ENCODE measurements at regions of chr16 and their contacts with region 1.

Region 1: DNA sequence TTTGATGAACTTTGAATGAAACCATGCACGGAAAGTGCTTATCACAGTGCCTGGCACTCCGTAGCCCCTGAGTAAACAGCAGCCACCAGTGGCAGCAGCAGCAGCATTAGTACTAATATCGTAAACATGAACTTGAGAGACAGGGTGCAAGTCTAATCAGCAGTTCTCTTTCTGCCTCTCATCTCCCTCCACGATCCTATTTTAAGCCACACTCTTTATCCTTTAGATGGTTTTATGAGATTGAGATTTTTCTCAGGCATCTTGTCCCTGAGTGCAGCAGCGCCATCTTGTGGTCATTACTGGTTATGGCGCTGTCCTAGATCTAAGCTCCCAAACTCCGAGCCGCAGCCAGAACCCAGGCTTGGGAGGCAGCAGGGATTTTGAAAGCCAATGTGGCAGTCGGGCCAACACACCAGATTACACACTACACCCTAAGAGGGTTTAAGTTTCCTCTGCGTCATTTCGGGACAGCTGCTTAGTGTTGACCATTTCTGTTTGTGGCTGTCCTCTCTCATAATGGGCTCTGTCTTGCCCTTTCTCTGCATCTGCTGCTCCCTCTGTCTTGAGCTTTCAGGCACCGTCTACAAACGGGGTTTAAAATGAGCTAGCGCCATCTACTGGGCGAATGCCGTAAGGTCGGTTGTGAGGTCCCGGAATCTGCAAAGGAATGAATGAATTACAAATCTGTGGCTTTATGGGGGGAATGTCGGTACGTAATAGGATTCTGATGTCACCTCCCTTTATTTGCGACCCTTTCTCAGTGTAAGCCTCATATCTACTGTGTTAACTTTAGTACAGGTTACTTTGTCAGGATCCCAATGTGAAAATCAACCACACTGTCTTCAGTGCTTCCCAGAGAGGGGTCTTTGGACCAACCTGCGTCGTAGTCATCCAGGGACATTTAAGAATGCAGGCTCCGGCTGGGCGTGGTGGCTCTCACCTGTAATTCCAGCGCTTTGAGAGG is 64.5 kb downstream of the CYLD start:
- DNase-seq: peak; percentile 90
- H3K4me3 Mint-ChIP-seq: peak overlapping the region; percentile 67
- H3K27ac Mint-ChIP-seq: peak overlapping the region; percentile 72
- H3K4me1 Mint-ChIP-seq: peaks cover 12% of the 10 kb centered on the region
- H3K27me3 Mint-ChIP-seq: no peaks in the 10 kb centered on the region

Region 2: DNA sequence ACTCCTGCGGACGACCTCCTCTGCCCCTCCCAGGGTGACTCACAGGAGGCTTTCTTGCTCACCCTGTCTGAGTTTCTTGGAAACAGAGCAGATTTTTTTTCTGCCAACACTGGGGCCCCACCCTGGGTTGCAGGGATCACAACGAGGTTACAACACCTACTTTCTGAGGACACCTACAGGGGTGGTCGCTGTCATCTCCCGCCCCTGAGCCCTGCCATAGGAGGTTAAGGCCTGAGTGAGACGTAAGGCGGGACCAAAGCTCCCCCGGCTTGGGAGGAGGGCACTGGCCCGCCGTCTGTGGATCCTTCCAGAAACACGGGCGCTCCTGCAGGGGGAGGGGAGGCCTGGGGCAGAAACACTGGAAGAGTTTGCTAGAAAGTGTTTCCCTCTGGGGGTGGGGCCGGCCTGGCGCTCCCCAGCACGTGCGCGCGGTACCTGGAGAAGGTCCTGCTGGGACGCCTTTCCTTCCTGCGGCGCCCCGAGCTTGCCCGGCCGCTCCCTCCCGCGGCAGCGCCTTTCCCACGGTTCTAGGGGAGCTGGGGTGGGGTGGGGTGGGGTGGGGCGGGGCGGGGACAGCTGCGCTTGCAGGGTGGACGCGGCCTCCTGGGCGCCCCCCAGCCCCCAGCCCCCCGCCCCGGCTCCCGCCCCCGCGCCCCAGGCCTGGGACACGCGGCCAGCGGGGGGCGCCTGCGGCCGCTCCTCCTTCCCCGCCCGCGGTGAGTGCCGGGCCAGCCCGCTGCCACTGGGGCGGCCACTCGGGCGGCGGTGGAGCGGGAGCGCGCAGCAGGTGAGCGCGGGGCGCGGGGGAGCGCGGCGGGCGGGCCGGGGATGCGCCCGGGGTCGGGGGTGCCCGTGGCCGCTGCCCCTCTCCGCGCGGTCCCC is 560.7 kb before region 1 on chr16:
- CTCF ChIA-PET with region 1: interaction called, 10 read pairs
- POLR2A ChIA-PET with region 1: no interaction called
- intact Hi-C with region 1: no loop called
- DNase-seq: peak; percentile 82
- H3K4me3 Mint-ChIP-seq: peak overlapping the region; percentile 78
- H3K27ac Mint-ChIP-seq: peak overlapping the region; percentile 65
- H3K4me1 Mint-ChIP-seq: peaks cover 11% of the 10 kb centered on the region
- H3K27me3 Mint-ChIP-seq: no peaks in the 10 kb centered on the region

Region 3: GRCh38 chr16:50360779-50361178 is 445.6 kb before region 1 on chr16:
- CTCF ChIA-PET with region 1: interaction called, 24 read pairs
- POLR2A ChIA-PET with region 1: no interaction called
- intact Hi-C with region 1: loop called (anchors 5 kb)
- DNase-seq: no peak
- H3K4me3 Mint-ChIP-seq: no peak overlapping the region
- H3K27ac Mint-ChIP-seq: peak overlapping the region; percentile 30
- H3K4me1 Mint-ChIP-seq: peaks cover 52% of the 10 kb centered on the region
- H3K27me3 Mint-ChIP-seq: no peaks in the 10 kb centered on the region

Region 4: GRCh38 chr16:50665128-50665878 is 141.1 kb before region 1 on chr16:
- CTCF ChIA-PET with region 1: interaction called, 430 read pairs
- POLR2A ChIA-PET with region 1: interaction called, 3 read pairs
- intact Hi-C with region 1: loop called (anchors 1 kb)
- DNase-seq: peak; percentile 87
- H3K4me3 Mint-ChIP-seq: peak overlapping the region; percentile 63
- H3K27ac Mint-ChIP-seq: peak overlapping the region; percentile 33
- H3K4me1 Mint-ChIP-seq: peaks cover 39% of the 10 kb centered on the region
- H3K27me3 Mint-ChIP-seq: no peaks in the 10 kb centered on the region

Region 5: DNA sequence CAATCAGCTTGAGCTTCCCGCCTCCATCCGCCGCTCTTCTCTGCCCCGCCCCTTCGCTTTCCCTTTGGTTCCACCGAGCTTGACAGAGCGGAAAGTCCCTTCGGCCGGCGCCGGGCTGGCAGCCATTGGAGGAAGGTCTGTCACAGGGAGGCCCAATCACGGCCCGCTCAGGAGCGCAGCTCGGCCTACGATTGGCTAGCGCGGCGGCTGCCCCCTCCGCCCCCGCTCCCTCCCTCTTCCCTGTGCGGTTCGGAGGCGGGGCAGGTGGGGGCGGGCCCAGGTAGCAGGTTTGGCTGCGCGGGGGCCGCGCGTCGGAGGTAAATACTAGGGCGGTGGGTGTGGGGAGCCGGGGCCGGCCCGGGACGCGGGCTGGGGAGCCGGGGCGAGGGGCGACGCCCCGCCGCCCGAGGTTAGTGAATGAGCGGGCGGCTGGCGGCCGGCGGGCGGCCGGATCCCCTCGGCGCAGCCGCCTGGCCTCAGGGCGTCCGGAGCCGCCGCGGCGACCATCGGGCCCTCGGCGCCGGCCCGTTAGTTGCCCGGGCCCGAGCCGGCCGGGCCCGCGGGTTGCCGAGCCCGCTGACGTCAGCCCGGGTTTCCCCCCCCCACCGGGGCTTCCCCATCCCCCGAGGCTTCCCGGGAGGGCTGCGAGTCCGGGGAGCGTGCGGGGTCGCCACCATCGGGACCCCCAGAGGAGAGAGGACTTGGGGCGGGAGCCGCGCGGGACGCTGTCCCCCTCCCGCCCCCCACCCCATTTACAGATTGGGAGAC is 64.4 kb before region 1 on chr16 and contains the start of gene CYLD:
- CTCF ChIA-PET with region 1: interaction called, 16 read pairs
- POLR2A ChIA-PET with region 1: no interaction called
- intact Hi-C with region 1: loop called (anchors 1 kb)
- DNase-seq: peak; percentile 100
- H3K4me3 Mint-ChIP-seq: peak within 1 kb of the TSS; percentile 94
- H3K27ac Mint-ChIP-seq: peak within 1 kb of the TSS; percentile 97
- H3K4me1 Mint-ChIP-seq: peaks cover 44% of the 10 kb centered on the region
- H3K27me3 Mint-ChIP-seq: no peaks in the 10 kb centered on the region
- total RNA-seq, gene CYLD: 133 to 135 TPM

Region 6: DNA sequence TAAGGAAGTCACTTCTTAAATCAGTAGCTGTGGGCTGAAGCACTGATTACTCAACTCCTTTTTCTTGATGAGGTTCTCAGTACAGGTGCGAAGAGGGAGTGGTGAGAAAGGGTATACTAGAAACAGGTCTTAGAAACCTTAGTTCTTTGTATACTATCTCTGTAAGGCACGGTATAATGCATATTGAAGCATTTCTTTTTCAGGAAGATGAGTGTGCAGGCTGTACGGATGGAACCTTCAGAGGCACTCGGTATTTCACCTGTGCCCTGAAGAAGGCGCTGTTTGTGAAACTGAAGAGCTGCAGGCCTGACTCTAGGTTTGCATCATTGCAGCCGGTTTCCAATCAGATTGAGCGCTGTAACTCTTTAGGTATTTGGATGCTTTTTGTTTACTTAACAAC is 25.3 kb before region 1 on chr16:
- CTCF ChIA-PET with region 1: interaction called, 39 read pairs
- POLR2A ChIA-PET with region 1: no interaction called
- intact Hi-C with region 1: loop called (anchors 1 kb)
- DNase-seq: peak; percentile 50
- H3K4me3 Mint-ChIP-seq: peak overlapping the region; percentile 33
- H3K27ac Mint-ChIP-seq: peak overlapping the region; percentile 78
- H3K4me1 Mint-ChIP-seq: peaks cover 70% of the 10 kb centered on the region
- H3K27me3 Mint-ChIP-seq: no peaks in the 10 kb centered on the region

Region 7: DNA sequence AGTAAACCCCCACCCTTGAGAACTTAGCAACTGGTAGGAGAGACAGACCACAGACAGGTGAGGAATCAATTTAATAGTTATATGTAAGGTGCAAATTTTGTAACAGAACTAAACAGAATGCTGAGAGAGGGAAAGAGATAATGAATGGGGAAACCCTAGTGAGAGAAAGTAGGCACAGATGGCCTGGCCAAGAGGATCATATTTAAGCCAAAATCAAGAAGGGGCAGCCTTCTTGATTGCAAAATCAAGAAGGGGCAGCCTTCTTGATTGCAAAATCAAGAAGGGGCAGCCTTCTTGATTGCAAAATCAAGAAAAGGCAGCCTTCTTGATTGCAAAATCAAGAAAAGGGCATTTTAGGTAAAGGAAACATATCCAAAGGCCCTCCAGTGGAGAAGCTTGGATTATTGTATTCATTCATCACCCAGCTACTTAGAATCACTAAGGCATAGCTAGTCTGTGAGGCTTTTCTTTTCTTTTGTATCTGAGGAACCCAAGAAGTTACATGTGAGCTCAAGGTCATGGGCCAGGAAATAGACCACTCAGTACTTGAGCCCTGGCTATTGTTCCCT is 126.1 kb after region 1 on chr16:
- CTCF ChIA-PET with region 1: no interaction called
- POLR2A ChIA-PET with region 1: no interaction called
- intact Hi-C with region 1: no loop called
- DNase-seq: no peak
- H3K4me3 Mint-ChIP-seq: no peak overlapping the region
- H3K27ac Mint-ChIP-seq: no peak overlapping the region
- H3K4me1 Mint-ChIP-seq: no peaks in the 10 kb centered on the region
- H3K27me3 Mint-ChIP-seq: peaks cover 12% of the 10 kb centered on the region

Measured in activated CD4-positive, alpha-beta memory T cell treated with anti-CD3 and anti-CD28 coated beads for 36 hours (primary cell).